Activated CD4-positive, alpha-beta T cell treated with anti-CD3 and anti-CD28 coated beads, Interleukin-2, amount 10 ng/mL, durations not matched to agents 24 days and 14 days (primary cell): ENCODE measurements at regions of chr19 and their contacts with region 1.

Region 1: GRCh38 chr19:7903244-7904073 is at the start of gene MAP2K7:
- DNase-seq: peak; percentile 100
- H3K4me3 Mint-ChIP-seq: peak within 1 kb of the TSS; percentile 93
- H3K27ac Mint-ChIP-seq: peak within 1 kb of the TSS; percentile 96
- H3K4me1 Mint-ChIP-seq: peaks cover 25% of the 10 kb centered on the region
- H3K27me3 Mint-ChIP-seq: peaks cover 3% of the 10 kb centered on the region
- total RNA-seq, gene MAP2K7: 46.7 and 47.6 TPM in 2 replicates

Region 2: GRCh38 chr19:7550987-7551761 is 352.3 kb before region 1 on chr19:
- intact Hi-C with region 1: no loop called
- DNase-seq: peak; percentile 65
- H3K4me3 Mint-ChIP-seq: no peak overlapping the region
- H3K27ac Mint-ChIP-seq: no peak overlapping the region
- H3K4me1 Mint-ChIP-seq: peaks cover 3% of the 10 kb centered on the region
- H3K27me3 Mint-ChIP-seq: no peaks in the 10 kb centered on the region

Region 3: DNA sequence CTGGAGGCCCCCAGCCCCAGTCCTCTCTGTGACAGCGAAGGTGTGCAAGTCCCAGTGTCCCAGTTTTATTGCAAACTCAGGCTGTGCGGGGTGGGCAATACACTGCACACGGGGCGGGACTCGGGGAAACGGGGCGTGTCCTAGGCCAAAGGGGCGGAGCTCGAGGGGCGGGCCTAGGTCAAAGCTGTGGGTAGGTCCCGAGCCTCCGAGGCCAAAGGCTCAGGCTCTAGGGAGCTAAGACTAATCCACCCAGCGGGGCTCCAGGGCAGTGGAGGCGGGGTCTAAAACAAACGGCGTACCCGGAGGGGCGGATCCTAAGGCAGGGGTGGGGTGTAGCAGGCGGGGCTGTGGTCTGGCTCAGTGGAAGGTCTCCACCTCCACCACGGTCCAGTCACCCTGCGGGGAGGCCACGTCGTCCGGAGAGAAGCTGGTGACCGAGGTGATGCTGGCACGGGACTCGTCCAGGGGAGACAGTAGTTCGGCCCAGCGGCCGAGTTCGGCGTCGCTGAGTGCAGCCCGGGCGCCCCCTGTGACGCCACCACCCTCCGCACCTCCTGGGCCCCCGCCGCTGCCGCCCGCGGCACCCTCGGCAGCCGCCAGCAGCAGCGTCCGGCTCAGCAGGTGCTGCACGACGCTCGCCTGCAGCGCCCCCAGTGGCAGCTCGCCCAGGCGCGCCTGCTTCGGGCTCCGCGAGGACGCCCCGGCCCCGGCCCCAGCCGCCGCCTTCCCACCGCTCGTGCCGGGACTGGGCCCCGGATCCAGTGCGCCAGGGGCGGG is 34.6 kb before region 1 on chr19:
- intact Hi-C with region 1: loop called (anchors 2 kb)
- DNase-seq: peak; percentile 95
- H3K4me3 Mint-ChIP-seq: peak overlapping the region; percentile 80
- H3K27ac Mint-ChIP-seq: peak overlapping the region; percentile 36
- H3K4me1 Mint-ChIP-seq: peaks cover 30% of the 10 kb centered on the region
- H3K27me3 Mint-ChIP-seq: peaks cover 38% of the 10 kb centered on the region

Region 4: GRCh38 chr19:7986321-7987083 is 83.0 kb after region 1 on chr19:
- intact Hi-C with region 1: no loop called
- DNase-seq: no peak
- H3K4me3 Mint-ChIP-seq: no peak overlapping the region
- H3K27ac Mint-ChIP-seq: no peak overlapping the region
- H3K4me1 Mint-ChIP-seq: peaks cover 8% of the 10 kb centered on the region
- H3K27me3 Mint-ChIP-seq: no peaks in the 10 kb centered on the region